ENCODE measurements at regions of chr5 and their contacts with region 1.

Region 1: DNA sequence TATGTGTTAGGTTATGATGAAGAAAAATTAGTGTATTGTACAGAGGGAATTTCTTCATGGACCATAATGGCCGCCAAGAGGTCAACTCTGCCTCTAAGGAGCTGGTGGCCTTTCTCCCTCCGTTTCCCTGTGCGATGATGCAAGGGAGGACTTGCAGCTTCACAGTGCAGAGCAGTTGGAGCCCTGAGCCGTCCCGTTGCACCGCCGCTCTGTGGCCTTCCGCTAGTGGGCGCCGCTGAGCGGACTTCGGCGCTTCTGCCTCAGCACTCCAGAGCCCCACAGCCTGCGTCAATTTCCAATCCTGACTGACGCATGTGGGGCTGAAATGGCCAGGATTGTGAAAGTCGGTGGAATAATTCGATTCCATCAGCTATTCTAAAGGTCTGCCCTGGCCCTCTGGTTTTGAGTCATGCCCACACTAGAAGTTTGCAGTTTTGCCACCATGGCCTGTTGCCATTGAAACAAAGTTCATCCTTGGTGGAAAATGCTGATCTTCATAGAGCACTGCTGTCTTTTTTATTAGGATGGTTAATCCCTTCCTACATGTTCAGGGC is 22.7 kb upstream of the LECT2 start:
- DNase-seq: peak; percentile 85
- H3K4me3 ChIP-seq: no peak overlapping the region
- H3K27ac ChIP-seq: no peak overlapping the region
- H3K4me1 ChIP-seq: peaks cover 10% of the 10 kb centered on the region
- H3K27me3 ChIP-seq: peaks cover 13 to 22% of the 10 kb centered on the region in 2 experiments
- CTCF ChIP-seq: peak; percentile 98 to 99
- POLR2A ChIP-seq: no peak

Region 2: DNA sequence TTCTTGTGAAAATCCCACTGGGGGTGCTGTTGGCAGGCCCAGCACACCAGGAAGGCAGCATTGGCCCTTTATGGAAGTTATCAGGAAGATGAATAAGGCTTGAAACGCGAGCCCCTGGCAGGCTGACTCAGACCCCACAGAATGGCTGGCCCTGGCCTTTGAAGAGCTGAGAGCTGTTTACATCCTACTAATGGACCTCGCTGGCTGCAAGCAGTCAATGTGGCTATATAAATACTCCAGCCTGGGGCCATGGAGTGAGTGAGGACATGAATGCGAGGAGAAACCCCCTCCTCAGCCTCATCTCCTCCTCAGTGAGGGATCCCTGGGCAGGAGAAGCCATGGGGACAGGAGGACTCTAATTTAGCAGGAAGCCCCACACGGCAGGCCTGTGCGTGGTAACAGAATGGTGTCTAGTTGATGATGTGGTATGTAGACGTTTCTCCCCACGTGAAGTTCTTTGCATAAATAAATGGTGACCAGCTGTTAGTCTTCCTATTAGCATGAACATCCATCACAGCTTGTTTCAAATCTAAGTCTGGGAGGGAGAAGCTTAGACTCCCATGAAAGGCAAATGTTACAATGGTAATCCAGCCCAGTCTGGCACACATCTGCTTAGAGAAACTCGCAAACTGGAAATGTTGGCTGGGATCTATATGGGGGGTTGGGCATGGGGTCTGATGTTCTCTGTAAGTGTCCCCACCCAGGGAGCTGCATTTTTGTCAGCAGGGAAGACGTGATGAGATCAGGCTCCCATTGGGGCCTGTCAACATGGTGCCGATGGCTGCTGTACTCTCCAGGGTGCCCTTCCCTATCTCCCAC is 768.3 kb before region 1 on chr5:
- CTCF ChIA-PET with region 1: no interaction called
- POLR2A ChIA-PET with region 1: no interaction called
- dilution Hi-C with region 1: no loop called
- intact Hi-C with region 1: no loop called
- DNase-seq: peak; percentile 97
- H3K4me3 ChIP-seq: no peak overlapping the region
- H3K27ac ChIP-seq: peak overlapping the region; percentile 59
- H3K4me1 ChIP-seq: peaks cover 22% of the 10 kb centered on the region
- H3K27me3 ChIP-seq: no peaks in the 10 kb centered on the region
- CTCF ChIP-seq: peak; percentile 43 to 46
- POLR2A ChIP-seq: no peak

Region 3: DNA sequence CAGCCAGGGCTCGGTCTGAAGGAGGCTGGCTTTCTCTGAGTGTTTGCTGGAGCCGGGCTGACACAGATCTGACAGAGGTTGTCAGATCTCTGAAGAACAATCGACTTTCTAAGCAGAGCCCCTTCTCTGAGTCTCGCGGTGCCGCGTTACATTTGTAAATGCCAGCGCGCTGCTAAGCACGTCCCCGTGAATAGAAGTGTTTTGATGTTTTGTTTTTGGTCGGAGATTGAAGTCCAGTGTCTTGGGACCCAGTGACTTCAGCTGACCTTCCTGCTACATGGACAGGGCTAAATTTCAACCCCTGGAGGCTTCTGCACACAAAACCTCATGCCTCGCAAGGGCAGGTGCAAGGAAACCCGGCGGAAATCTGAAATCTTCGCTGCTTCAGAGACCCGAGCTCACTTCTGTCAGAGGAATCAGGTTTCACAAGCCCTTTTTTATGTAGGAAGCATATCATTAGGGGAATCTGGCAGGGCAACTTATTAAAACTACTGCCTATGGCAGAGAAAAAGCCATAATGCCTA is 468.9 kb before region 1 on chr5:
- CTCF ChIA-PET with region 1: no interaction called
- POLR2A ChIA-PET with region 1: no interaction called
- dilution Hi-C with region 1: no loop called
- intact Hi-C with region 1: no loop called
- DNase-seq: no peak
- H3K4me3 ChIP-seq: no peak overlapping the region
- H3K27ac ChIP-seq: no peak overlapping the region
- H3K4me1 ChIP-seq: no peaks in the 10 kb centered on the region
- H3K27me3 ChIP-seq: peaks cover 14 to 28% of the 10 kb centered on the region in 2 experiments
- CTCF ChIP-seq: no peak
- POLR2A ChIP-seq: no peak

Region 4: DNA sequence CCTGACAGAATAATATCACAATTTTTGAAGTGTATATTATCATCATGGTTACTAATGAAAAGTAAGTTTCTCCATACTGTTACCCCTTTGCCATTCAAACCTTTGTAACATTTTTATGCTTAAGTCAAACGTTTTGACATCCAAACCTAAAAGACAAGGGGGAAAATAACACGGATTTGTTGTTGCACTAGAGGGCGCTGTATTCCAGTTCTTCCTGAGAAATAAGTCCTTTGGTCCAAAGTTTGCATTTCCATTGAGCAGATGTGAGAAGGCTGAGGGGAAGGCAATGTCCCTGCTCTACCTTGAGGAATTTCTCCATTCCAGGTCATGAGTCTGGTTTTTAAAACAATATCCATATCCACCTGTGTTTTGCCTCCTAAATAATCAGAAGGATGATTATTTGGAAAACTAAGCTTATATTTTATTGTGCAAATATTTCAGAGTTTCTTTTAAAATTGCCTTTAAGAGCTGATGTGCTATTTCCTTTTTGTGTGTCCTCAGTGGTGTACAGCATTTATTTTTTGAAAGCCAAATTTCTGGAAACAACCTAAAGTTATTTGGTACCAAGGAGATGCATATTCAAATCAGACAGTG is 32.4 kb before region 1 on chr5:
- CTCF ChIA-PET with region 1: interaction called, 19 read pairs
- POLR2A ChIA-PET with region 1: no interaction called
- dilution Hi-C with region 1: no loop called
- intact Hi-C with region 1: loop called (anchors 1 kb)
- DNase-seq: peak; percentile 71
- H3K4me3 ChIP-seq: no peak overlapping the region
- H3K27ac ChIP-seq: no peak overlapping the region
- H3K4me1 ChIP-seq: no peaks in the 10 kb centered on the region
- H3K27me3 ChIP-seq: peaks cover 4 to 20% of the 10 kb centered on the region in 2 experiments
- CTCF ChIP-seq: peak; percentile 58 to 60
- POLR2A ChIP-seq: no peak

Region 5: DNA sequence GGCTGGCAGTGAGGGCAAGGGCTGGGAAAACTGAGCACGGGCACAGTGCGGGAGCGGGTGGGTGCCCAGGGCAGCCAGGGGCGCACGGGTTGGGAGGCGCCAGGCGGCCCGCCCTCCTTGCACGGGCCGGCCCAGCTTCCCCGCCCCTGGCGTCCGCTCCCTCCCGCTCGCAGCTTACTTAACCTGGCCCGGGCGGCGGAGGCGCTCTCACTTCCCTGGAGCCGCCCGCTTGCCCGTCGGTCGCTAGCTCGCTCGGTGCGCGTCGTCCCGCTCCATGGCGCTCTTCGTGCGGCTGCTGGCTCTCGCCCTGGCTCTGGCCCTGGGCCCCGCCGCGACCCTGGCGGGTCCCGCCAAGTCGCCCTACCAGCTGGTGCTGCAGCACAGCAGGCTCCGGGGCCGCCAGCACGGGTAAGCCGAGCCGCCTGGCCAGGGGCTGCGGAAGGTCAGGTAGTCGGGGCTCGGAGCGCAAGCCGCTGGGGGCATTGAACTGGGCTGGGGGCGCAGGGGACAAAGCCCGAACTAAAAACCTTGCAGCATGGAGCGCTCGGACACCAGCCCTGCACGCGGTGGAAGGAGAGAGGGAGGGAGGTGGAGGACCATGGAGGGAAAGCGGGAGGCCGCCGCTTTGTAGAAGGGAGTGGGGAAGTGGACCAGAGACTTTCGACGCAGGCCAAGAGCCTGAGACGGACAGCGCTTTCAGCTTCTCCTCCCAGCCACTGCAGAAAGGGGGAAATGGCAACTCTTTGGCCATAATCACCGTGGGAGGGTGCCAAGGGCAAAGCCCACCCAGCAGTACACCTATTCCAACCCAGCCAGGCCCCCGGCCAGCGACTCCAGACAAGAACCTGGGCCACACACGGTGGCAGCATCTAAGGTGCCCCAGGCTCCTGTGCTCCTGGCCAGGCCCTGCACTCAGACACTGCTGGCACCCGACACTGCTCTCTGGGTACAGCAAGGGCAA is 51.6 kb after region 1 on chr5 and contains the start of gene TGFBI:
- CTCF ChIA-PET with region 1: interaction called, 19 read pairs
- POLR2A ChIA-PET with region 1: no interaction called
- dilution Hi-C with region 1: no loop called
- intact Hi-C with region 1: no loop called
- DNase-seq: peak; percentile 47
- H3K4me3 ChIP-seq: peak within 1 kb of the TSS; percentile 22 to 45 (median 26)
- H3K27ac ChIP-seq: no peak within 1 kb of the TSS
- H3K4me1 ChIP-seq: peaks cover 3% of the 10 kb centered on the region
- H3K27me3 ChIP-seq: no peaks in the 10 kb centered on the region
- CTCF ChIP-seq: peak in 1 of 2 donors; percentile 9
- POLR2A ChIP-seq: no peak
- total RNA-seq, gene TGFBI: 6.5 and 8.7 TPM in 2 replicates

Region 6: GRCh38 chr5:136053336-136054141 is 76.1 kb after region 1 on chr5:
- CTCF ChIA-PET with region 1: interaction called, 46 read pairs
- POLR2A ChIA-PET with region 1: no interaction called
- dilution Hi-C with region 1: no loop called
- intact Hi-C with region 1: loop called (anchors 1 kb)
- DNase-seq: peak; percentile 77
- H3K4me3 ChIP-seq: no peak overlapping the region
- H3K27ac ChIP-seq: peak overlapping the region; percentile 84
- H3K4me1 ChIP-seq: peaks cover 36% of the 10 kb centered on the region
- H3K27me3 ChIP-seq: no peaks in the 10 kb centered on the region
- CTCF ChIP-seq: no peak
- POLR2A ChIP-seq: peak; percentile 28

Region 7: GRCh38 chr5:136080483-136081216 is 103.2 kb after region 1 on chr5:
- CTCF ChIA-PET with region 1: interaction called, 58 read pairs
- POLR2A ChIA-PET with region 1: no interaction called
- dilution Hi-C with region 1: no loop called
- intact Hi-C with region 1: loop called (anchors 1 kb)
- DNase-seq: peak; percentile 96
- H3K4me3 ChIP-seq: peak overlapping the region; percentile 55 to 84 (median 68)
- H3K27ac ChIP-seq: peak overlapping the region; percentile 60
- H3K4me1 ChIP-seq: peaks cover 13% of the 10 kb centered on the region
- H3K27me3 ChIP-seq: peaks cover 15 to 27% of the 10 kb centered on the region in 2 experiments
- CTCF ChIP-seq: no peak
- POLR2A ChIP-seq: peak; percentile 41